AG04450 (cell line): ENCODE measurements at regions of chr1 and their contacts with region 1.

Region 1: DNA sequence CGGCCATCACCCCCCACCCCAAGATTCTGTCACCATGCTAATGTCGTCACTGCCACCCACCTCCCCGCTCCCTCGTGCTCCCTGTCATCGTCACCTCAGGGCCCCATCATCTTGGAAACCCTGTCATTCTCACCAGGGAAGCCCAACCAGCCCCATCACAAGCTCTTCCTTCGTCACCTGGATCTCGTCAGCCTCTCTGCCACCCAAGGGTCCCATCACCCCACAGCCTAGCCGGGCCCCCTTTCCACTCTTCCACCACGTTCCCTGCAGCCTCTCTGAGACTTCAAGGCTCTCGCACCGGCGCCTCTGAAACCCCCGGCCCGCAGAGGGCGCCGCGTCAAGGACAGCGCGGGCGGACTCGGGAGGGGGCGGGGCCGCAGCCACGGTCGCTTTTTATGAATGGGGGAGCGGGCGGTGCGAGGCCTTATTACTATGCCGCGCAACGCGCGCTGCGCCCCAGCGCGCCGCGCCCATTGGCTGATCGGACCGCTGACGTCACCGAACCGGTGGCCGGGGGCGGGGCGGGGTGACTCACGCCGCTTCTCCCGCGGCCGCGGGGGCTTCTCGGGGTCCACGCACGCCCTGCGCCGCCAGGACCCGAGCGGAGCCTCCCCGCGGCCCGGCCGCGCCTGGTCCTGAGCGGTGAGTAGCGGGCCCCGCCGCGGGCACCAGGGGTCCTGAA is at the start of gene GPR3:
- DNase-seq: peak; percentile 78
- H3K4me3 ChIP-seq: peak within 1 kb of the TSS; percentile 77
- H3K27ac ChIP-seq: peak within 1 kb of the TSS; percentile 21
- H3K27me3 ChIP-seq: no peaks in the 10 kb centered on the region
- CTCF ChIP-seq: peak; percentile 61
- polyA plus RNA-seq, gene GPR3: 1.3 and 1.7 TPM in 2 replicates

Region 2: DNA sequence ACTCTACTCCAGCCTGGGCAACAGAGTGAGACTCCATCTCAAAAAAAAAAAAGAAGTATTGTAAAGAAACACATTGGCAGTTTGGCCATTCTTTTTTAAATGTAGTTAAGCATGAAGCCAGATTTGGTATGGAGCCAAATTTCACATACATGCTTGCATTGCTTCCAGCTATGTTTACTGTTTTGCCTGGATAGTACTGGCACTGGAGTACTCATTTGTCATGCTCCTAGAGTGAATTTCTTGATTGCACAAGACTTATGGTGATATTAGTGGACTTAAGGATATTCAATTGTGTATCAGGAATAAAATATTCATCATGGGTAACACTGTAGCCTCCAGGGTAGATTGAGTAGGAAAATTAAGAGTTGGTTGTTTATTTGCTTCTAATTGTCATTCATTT is 212.9 kb before region 1 on chr1:
- CTCF ChIA-PET with region 1: no interaction called
- POLR2A ChIA-PET with region 1: no interaction called
- DNase-seq: no peak
- H3K4me3 ChIP-seq: no peak overlapping the region
- H3K27ac ChIP-seq: no peak overlapping the region
- H3K27me3 ChIP-seq: no peaks in the 10 kb centered on the region
- CTCF ChIP-seq: no peak

Region 3: DNA sequence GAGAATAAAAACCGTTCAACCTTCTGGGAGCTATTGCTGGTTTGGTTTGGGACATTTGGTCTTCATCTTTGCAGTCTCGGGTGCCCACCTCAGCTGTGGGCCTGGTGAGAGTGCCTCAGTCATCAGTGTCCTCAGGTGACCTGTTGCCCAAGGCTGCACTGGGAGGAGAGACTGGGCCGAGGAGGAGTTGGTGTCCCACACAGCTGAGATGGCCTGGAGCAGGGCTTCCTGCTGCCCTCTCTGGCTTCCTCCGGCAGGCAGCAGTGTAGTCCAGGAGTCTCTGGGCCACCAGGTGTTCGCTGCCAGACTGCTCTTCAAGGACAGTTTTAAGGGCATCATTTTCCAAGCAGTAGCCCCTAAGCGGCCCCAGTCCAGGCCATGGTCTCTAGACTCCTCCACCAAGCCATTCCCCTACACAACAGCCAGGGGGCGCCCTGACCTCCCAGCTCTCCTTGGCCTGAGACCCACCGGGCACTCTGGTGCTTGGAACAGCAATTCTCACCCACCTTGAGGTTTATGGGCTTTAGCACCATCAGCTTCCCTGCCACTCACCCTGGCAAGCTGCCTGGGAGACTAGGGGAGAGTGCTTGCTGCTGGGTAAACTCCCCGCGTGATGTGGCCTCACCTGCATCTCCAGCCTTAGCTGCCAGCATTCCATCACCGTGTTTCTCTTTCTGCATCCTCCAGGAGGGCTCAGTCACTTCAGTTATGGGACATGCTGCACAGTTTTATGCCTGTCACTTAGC is 59.5 kb before region 1 on chr1:
- CTCF ChIA-PET with region 1: interaction called, 16 read pairs
- POLR2A ChIA-PET with region 1: no interaction called
- DNase-seq: no peak
- H3K4me3 ChIP-seq: no peak overlapping the region
- H3K27ac ChIP-seq: no peak overlapping the region
- H3K27me3 ChIP-seq: no peaks in the 10 kb centered on the region
- CTCF ChIP-seq: peak; percentile 81

Region 4: DNA sequence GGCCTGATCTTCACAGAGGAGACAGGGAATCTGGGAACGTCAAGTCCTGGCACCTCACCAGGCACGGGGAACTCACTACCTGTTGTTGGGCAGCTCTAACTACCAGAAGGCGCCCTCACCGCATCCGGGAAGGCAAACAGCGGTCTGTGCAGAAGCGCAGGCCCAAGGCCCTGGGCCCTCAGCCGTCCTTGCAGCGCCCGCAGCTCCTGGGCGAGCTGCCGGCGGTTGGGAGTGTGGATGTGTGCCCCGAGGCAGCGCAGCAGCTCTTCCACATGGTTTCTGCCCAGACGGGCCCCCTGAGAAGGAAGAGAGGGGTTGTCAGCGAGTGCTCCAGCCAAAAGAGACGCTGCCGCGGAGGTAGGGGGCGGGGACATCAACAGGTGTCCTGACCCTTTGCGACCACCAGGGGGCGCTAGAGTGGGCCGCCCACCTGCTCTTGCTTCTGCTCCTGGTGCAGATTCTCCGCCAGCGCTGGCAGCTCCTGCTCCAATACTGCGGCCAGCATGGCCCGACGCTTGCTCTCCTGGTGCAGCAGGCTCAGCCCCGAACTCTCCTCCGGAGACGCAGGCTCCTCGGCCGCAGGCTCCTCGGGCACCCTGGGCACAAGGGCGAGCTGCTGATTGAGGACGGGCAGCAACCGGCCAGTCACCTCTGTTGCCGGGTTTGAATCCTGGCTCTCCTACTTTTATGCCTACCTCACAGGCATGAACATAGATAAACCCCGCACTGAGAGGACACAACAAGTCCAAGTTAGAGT is 34.8 kb before region 1 on chr1:
- CTCF ChIA-PET with region 1: interaction called, 13 read pairs
- POLR2A ChIA-PET with region 1: no interaction called
- DNase-seq: no peak
- H3K4me3 ChIP-seq: no peak overlapping the region
- H3K27ac ChIP-seq: no peak overlapping the region
- H3K27me3 ChIP-seq: no peaks in the 10 kb centered on the region
- CTCF ChIP-seq: peak; percentile 86

Region 5: DNA sequence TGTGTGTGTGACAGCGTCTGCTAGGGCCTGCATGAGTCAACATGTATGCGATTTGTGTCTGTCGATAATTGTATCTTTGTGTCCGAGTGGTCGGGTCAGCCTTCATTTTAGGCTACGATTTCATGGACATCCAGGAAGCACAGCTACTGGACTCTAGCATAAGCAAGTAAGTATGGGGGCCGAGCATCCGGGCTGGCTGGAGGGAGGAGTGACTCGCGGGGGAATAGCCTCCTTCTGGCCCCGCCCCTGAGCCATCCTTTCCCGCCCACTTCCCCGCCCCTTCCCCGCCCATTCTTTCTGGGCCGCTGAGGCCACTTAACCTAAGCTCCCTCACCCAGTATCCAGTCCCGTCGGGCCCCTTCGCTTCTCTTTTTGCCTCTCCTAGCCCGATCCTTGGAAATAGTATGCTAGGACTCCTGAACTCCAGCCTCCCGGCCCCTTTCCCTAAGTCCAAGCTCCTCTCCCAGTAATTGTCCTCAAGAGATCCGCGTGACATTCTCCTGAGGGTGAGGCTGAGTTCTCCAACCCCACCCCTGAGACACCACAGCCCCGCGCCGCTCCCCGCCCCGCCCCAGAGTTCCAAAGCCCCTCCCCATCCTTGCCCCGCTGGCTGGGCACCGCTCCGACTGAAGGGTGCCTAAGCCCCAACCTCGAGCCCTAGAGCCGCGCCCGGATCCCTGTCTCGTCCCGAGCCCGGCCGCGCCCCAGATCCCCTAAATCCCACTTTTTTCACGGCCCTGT is 26.7 kb before region 1 on chr1:
- CTCF ChIA-PET with region 1: interaction called, 21 read pairs
- POLR2A ChIA-PET with region 1: interaction called, 3 read pairs
- DNase-seq: peak; percentile 67
- H3K4me3 ChIP-seq: peak overlapping the region; percentile 74
- H3K27ac ChIP-seq: peak overlapping the region; percentile 90
- H3K27me3 ChIP-seq: no peaks in the 10 kb centered on the region
- CTCF ChIP-seq: no peak

Region 6: DNA sequence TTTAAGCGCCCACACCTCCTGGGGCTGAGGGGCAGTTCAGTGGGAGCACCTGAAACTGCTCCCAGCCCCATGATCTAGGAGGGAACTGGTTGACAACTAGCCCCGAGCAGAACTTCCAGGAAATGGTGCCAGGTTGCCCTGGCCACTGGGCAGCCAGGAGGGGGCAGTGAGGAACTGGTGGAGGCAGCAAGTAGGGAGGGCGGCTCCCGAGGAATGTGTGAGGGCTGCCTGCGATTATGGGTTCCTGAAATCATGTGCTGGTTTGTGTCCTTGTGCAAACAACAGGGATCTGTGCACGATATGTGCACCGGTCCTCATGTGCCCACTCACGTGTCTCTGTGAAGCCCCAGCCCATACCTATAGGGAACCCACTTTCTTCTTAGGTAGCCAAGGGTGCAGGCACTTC is 10.1 kb after region 1 on chr1:
- CTCF ChIA-PET with region 1: interaction called, 10 read pairs
- POLR2A ChIA-PET with region 1: interaction called, 3 read pairs
- DNase-seq: no peak
- H3K4me3 ChIP-seq: no peak overlapping the region
- H3K27ac ChIP-seq: no peak overlapping the region
- H3K27me3 ChIP-seq: no peaks in the 10 kb centered on the region
- CTCF ChIP-seq: peak; percentile 52

Region 7: GRCh38 chr1:27473755-27474154 is 81.5 kb after region 1 on chr1:
- CTCF ChIA-PET with region 1: no interaction called
- POLR2A ChIA-PET with region 1: no interaction called
- DNase-seq: no peak
- H3K4me3 ChIP-seq: no peak overlapping the region
- H3K27ac ChIP-seq: no peak overlapping the region
- H3K27me3 ChIP-seq: no peaks in the 10 kb centered on the region
- CTCF ChIP-seq: no peak